Sigmoid colon (tissue), 7 donors: ENCODE measurements at regions of chrX and their contacts with region 1.

Region 1: GRCh38 chrX:48696301-48697181 is at the start of gene SUV39H1:
- DNase-seq: peak; percentile 94
- H3K4me3 ChIP-seq: peak within 1 kb of the TSS; percentile 42 to 74 (median 70)
- H3K27ac ChIP-seq: peak within 1 kb of the TSS; percentile 82 to 89 (median 88)
- H3K4me1 ChIP-seq: peaks cover 0 to 14% (median 12%) of the 10 kb centered on the region in 4 donors
- H3K27me3 ChIP-seq: no peaks in the 10 kb centered on the region
- CTCF ChIP-seq: no peak
- EP300 ChIP-seq: no peak
- POLR2A ChIP-seq: peak; percentile 71 to 75
- total RNA-seq, gene SUV39H1: 3.0 to 4.6 (median 3.7) TPM

Region 2: GRCh38 chrX:48665991-48666390 is 30.6 kb before region 1 on chrX:
- intact Hi-C with region 1: no loop called
- DNase-seq: no peak
- H3K4me3 ChIP-seq: no peak overlapping the region
- H3K27ac ChIP-seq: no peak overlapping the region
- H3K4me1 ChIP-seq: no peaks in the 10 kb centered on the region
- H3K27me3 ChIP-seq: no peaks in the 10 kb centered on the region
- CTCF ChIP-seq: no peak
- EP300 ChIP-seq: no peak
- POLR2A ChIP-seq: no peak

Region 3: GRCh38 chrX:48676106-48676892 is 20.2 kb before region 1 on chrX:
- intact Hi-C with region 1: loop called (anchors 1 kb)
- DNase-seq: peak; percentile 95
- H3K4me3 ChIP-seq: peak overlapping the region; percentile 60 to 74 (median 72)
- H3K27ac ChIP-seq: peak overlapping the region; percentile 86 to 91 (median 86)
- H3K4me1 ChIP-seq: peaks cover 0 to 13% (median 4%) of the 10 kb centered on the region in 4 donors
- H3K27me3 ChIP-seq: no peaks in the 10 kb centered on the region
- CTCF ChIP-seq: no peak
- EP300 ChIP-seq: no peak
- POLR2A ChIP-seq: peak; percentile 38 to 68

Region 4: GRCh38 chrX:48737213-48737938 is 40.8 kb after region 1 on chrX:
- intact Hi-C with region 1: loop called (anchors 1 kb)
- DNase-seq: peak; percentile 97
- H3K4me3 ChIP-seq: peak overlapping the region; percentile 37 to 61 (median 56)
- H3K27ac ChIP-seq: peak overlapping the region; percentile 83 to 93 (median 86)
- H3K4me1 ChIP-seq: peaks cover 0 to 6% (median 2%) of the 10 kb centered on the region in 4 donors
- H3K27me3 ChIP-seq: no peaks in the 10 kb centered on the region
- CTCF ChIP-seq: no peak
- EP300 ChIP-seq: no peak
- POLR2A ChIP-seq: peak; percentile 57 to 66

Region 5: GRCh38 chrX:48957827-48958634 is 261.5 kb after region 1 on chrX:
- intact Hi-C with region 1: loop called (anchors 10 kb)
- DNase-seq: peak; percentile 99
- H3K4me3 ChIP-seq: peak overlapping the region; percentile 45 to 71 (median 70)
- H3K27ac ChIP-seq: peak overlapping the region; percentile 89 to 90 (median 90)
- H3K4me1 ChIP-seq: peaks cover 0 to 43% (median 26%) of the 10 kb centered on the region in 4 donors
- H3K27me3 ChIP-seq: no peaks in the 10 kb centered on the region
- CTCF ChIP-seq: no peak
- EP300 ChIP-seq: no peak
- POLR2A ChIP-seq: peak; percentile 17 to 66

Region 6: DNA sequence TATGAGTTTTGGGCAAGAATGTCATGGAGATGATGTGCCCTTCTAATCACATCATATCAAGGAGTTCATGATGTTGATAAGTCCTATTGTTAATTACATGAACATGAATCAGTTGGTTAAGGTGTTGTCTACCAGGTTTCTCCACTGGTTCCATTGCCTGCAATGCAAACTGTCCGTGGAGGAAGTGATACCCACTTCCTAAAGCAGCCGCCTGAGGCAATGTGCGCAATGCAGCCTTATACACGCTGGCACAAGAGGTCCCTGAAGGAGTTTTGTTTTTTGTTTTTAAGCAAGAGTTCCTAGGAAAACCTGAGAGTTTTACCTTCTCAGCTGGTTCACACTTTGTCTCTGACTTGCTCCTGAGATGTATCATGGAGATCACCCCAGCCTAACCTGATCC is 432.9 kb after region 1 on chrX:
- intact Hi-C with region 1: no loop called
- DNase-seq: no peak
- H3K4me3 ChIP-seq: no peak overlapping the region
- H3K27ac ChIP-seq: no peak overlapping the region
- H3K4me1 ChIP-seq: no peaks in the 10 kb centered on the region
- H3K27me3 ChIP-seq: no peaks in the 10 kb centered on the region
- CTCF ChIP-seq: no peak
- EP300 ChIP-seq: no peak
- POLR2A ChIP-seq: no peak

Region 7: DNA sequence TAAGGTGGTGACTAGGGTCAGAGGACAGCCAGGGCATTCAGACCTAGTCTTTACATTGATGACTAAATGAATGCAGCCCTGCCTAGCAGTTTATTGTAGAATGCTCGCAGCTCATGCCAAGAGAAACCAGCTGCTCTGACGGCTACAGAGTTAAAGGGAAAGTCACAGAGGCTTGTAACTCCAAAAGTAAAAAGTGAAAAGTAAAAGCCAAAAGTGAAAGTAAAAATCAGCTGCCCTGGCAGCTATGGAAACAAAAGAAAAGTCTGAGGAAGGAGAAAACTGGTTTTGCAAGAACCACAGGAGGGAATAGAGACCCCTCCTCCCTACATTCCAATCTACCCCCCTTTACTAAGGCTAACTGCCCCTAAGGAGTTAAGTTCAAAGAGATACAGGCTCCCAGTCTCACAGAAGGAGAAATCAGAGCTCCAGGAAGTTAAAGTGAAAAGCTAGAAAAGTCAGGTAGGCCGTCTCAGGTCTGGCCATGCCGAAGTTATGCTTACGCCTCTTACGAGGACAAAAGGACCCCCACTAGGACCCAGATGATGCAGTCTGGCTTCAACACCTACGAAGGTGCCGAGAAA is 613.0 kb after region 1 on chrX:
- intact Hi-C with region 1: no loop called
- DNase-seq: no peak
- H3K4me3 ChIP-seq: peak overlapping the region; percentile 21 to 45 (median 38)
- H3K27ac ChIP-seq: peak overlapping the region; percentile 62 to 75 (median 68)
- H3K4me1 ChIP-seq: peaks cover 0 to 10% (median 4%) of the 10 kb centered on the region in 4 donors
- H3K27me3 ChIP-seq: no peaks in the 10 kb centered on the region
- CTCF ChIP-seq: no peak
- EP300 ChIP-seq: no peak
- POLR2A ChIP-seq: no peak